Cardiac septum (tissue), 1 donor: ENCODE measurements at regions of chr3 and their contacts with region 1.

Region 1: GRCh38 chr3:169772897-169773828 is at the start of gene MYNN:
- DNase-seq: peak; percentile 97
- total RNA-seq, gene MYNN: 11.6 TPM

Region 2: DNA sequence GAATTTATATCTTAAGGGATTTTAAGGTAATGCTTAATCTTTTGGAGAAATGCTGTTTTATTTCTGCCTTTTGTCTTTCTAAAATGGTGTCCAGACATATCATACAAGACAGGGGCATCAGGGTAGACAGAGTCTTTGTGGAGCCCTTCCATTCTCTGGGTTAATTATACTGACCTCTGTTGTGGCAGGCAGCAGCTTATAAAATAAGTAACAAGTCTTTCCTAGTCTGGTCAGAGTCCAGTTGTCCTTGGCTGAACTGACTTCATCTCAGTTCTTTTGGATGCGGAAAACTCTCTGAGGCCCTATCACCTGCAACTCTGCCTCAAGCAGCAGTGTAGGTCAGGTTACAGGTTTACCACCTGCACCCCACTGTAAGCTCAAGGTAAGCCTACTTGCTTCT is 19.2 kb after region 1 on chr3:
- intact Hi-C with region 1: no loop called
- DNase-seq: no peak

Region 3: DNA sequence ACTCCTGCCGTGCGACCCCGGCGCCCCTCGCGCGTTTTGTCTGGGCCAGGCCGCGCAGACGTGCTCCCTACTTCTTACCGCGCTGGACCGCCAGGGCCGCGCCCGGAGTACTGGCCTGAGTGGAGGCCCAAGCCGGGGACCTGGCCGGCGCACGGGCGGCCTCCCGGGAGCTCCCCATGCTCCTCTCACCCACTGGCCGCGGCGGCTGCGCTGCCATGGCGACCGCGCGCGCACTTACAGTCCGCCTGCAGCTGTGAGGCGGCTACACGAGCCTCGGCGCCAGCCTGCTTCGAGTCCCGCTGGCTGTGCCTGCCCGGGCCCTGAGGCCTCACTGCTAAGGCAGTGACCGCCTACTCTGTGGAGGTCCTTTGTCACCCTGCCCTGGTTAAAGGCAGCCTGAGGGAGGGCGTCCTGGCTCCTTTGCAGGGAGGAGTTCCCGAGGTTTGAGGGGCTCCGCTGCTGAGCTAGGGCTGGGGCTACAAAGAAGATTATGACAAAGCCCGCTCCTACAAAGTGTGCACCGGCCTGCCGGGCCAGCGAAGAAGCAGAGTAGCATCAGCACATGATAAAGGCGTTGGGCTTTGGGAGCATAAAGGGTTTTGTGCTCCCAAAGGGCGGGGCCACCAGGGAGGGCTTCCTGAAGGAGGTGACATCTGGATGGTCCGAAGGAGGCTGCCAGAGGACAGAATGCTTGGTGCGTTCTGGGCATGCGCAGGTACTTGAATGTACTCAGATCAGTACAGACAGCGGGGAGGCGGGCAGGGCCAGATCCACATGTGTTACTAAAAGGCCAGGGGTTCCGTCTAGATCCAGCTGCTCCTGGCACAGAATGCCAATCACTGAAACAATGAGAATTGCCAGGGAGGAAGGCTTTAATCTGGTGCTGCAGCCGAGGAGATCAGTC is 39.4 kb after region 1 on chr3 and contains the starts of genes LRRC34 and LRRIQ4:
- intact Hi-C with region 1: loop called (anchors 5 kb)
- DNase-seq: peak; percentile 85
- total RNA-seq, gene LRRC34: 2.3 TPM
- total RNA-seq, gene LRRIQ4: not detected